ENCODE measurements at regions of chr3 and their contacts with region 1.

Region 1: GRCh38 chr3:67018105-67018788 is 20.1 kb downstream of the KBTBD8 start:
- DNase-seq: no peak
- ATAC-seq: peak; percentile 38
- H3K4me3 Mint-ChIP-seq: peak overlapping the region; percentile 52
- H3K27ac Mint-ChIP-seq: peak overlapping the region; percentile 69
- H3K4me1 Mint-ChIP-seq: peaks cover 55% of the 10 kb centered on the region
- H3K27me3 Mint-ChIP-seq: no peaks in the 10 kb centered on the region
- CTCF ChIP-seq: no peak

Region 2: GRCh38 chr3:66625505-66626216 is 392.6 kb before region 1 on chr3:
- CTCF ChIA-PET with region 1: no interaction called
- POLR2A ChIA-PET with region 1: no interaction called
- intact Hi-C with region 1: no loop called
- DNase-seq: no peak
- ATAC-seq: no peak
- H3K4me3 Mint-ChIP-seq: no peak overlapping the region
- H3K27ac Mint-ChIP-seq: no peak overlapping the region
- H3K4me1 Mint-ChIP-seq: no peaks in the 10 kb centered on the region
- H3K27me3 Mint-ChIP-seq: no peaks in the 10 kb centered on the region
- CTCF ChIP-seq: no peak

Region 3: DNA sequence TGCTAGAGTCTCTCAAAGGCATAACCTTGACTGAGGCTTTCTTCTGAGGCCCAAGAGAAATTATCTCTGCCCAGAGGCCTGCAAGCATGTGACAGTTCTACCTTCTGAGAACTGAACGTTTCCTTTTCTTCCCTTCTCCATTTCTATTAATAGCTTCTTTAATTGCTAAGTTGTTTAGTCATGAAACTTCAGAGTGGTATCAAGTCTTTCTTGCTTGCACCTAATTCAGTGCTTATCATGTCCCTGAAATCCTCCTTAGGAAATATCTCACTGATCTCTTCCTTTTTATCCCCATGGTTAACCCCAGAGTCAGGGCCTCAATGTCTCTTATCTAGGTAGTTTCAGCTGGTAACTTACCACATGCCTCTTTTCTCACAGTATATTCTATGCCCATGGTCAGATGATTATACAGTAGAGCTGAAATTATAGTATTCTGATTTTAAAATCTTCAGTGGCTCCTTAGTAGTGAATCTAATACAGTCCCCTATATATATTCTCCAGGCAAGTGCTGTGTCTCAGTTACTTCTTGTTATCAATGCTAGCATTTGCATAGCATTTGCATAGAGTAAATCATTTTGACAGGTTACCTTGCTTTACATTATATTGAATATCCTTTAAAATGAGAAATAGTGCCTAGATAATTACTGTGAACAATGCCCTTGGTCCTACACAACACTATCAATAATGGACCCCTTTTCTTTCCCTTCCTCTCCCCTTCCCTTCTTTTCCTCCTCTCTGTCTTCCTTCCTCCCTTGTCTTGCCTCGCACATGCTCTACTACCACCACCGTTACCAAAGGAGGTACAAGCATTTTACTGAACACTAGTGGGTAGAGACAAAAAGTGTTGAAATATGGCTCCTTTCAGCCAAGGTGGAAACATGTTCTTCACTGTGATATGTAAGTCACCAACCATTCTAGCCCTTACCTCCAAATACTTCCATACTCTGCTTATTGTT is 12.8 kb after region 1 on chr3:
- CTCF ChIA-PET with region 1: no interaction called
- POLR2A ChIA-PET with region 1: no interaction called
- intact Hi-C with region 1: loop called (anchors 2 kb)
- DNase-seq: no peak
- ATAC-seq: no peak
- H3K4me3 Mint-ChIP-seq: no peak overlapping the region
- H3K27ac Mint-ChIP-seq: no peak overlapping the region
- H3K4me1 Mint-ChIP-seq: peaks cover 23% of the 10 kb centered on the region
- H3K27me3 Mint-ChIP-seq: no peaks in the 10 kb centered on the region
- CTCF ChIP-seq: no peak